ENCODE measurements at regions of chr3 and their contacts with region 1.

Region 1: GRCh38 chr3:179929091-179929529 is 107.6 kb downstream of the PEX5L start:
- DNase-seq: peak; percentile 73
- ATAC-seq: peak; percentile 71
- H3K4me3 ChIP-seq: no peak overlapping the region
- H3K27ac ChIP-seq: no peak overlapping the region
- H3K4me1 ChIP-seq: no peaks in the 10 kb centered on the region
- H3K27me3 ChIP-seq: no peaks in the 10 kb centered on the region
- CTCF ChIP-seq: peak; percentile 92

Region 2: GRCh38 chr3:179768080-179768479 is 161.0 kb before region 1 on chr3:
- CTCF ChIA-PET with region 1: no interaction called
- POLR2A ChIA-PET with region 1: no interaction called
- intact Hi-C with region 1: loop called (anchors 1 kb)
- DNase-seq: peak; percentile 90
- ATAC-seq: peak; percentile 83
- H3K4me3 ChIP-seq: no peak overlapping the region
- H3K27ac ChIP-seq: no peak overlapping the region
- H3K4me1 ChIP-seq: peaks cover 18% of the 10 kb centered on the region
- H3K27me3 ChIP-seq: no peaks in the 10 kb centered on the region
- CTCF ChIP-seq: peak; percentile 87

Region 3: DNA sequence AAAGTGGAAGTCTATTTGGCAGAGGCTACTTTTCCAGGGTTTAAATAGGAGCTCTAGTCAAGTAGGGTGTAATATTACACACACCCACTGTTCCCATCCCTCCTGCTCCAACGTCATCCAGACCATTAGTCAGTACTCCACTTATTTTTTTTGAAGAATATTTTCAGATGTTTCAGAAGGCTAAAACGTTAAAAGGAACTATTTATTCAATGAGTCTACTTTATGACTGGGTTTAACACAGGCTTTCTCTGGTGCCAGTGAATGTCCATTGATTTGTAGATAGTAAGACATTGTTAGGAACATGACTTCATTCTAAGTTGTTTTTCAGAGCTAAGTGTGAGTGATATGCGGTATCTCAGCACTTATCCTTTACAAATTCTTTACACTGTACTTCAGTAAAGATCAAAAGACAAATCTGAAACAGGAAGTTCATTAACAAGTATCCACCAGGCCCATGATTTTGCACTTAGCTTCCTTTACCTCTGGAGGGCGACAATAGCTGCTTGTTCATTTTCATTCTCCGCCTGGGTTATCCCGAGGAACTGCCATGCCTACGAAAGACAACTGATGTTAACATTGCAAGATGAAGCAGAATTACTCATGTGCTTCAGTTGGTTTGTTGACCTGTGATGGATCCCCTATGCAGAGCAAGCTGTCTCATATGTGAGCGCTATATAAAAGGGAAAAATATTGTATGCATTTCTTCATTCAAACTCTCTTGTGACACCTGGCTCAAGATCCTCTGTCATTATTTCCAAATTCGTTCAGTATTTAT is 117.6 kb before region 1 on chr3:
- CTCF ChIA-PET with region 1: interaction called, 8 read pairs
- POLR2A ChIA-PET with region 1: no interaction called
- intact Hi-C with region 1: loop called (anchors 5 kb)
- DNase-seq: peak; percentile 88
- ATAC-seq: peak; percentile 81
- H3K4me3 ChIP-seq: no peak overlapping the region
- H3K27ac ChIP-seq: peak overlapping the region; percentile 77
- H3K4me1 ChIP-seq: peaks cover 13% of the 10 kb centered on the region; the same call in 1 of the 2 replicates
- H3K27me3 ChIP-seq: no peaks in the 10 kb centered on the region
- CTCF ChIP-seq: peak; percentile 93

Region 4: DNA sequence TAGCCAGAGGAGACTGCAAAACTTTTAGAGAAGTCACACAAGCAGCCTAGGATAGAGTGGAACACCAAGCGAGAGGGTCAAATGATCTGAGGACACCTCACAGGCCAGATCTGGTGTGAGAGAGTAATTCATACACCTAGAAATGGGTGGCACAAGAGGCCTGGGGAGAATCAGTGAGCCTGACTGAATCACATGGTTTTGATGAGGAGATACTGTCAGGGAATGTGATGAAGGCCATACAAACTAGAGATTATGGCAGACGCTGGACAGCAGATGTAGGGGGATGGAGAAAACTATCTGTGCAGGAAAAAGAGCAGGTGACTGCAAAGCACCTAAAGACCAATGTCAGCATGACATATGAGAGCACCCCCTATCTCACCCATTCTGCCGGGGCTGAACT is 567.9 kb after region 1 on chr3:
- CTCF ChIA-PET with region 1: no interaction called
- POLR2A ChIA-PET with region 1: no interaction called
- intact Hi-C with region 1: loop called (anchors 5 kb)
- DNase-seq: no peak
- ATAC-seq: no peak
- H3K4me3 ChIP-seq: no peak overlapping the region
- H3K27ac ChIP-seq: no peak overlapping the region
- H3K4me1 ChIP-seq: no peaks in the 10 kb centered on the region
- H3K27me3 ChIP-seq: no peaks in the 10 kb centered on the region
- CTCF ChIP-seq: no peak